HepG2 (cell line): ENCODE measurements at regions of chrX and their contacts with region 1.

Region 1: GRCh38 chrX:57643698-57644097 is 36.4 kb downstream of the NLRP2B start:
- DNase-seq: peak; percentile 80
- ATAC-seq: peak; percentile 68
- H3K4me3 ChIP-seq: no peak overlapping the region
- H3K27ac ChIP-seq: no peak overlapping the region
- H3K4me1 ChIP-seq: peaks cover 46% of the 10 kb centered on the region
- H3K27me3 ChIP-seq: no peaks in the 10 kb centered on the region
- CTCF ChIP-seq: no peak
- EP300 ChIP-seq: peak in 1 of 2 experiments; percentile 71; a peak in 2 of 4 replicates
- POLR2A ChIP-seq: no peak
- RAD21 ChIP-seq: no peak

Region 2: GRCh38 chrX:57595381-57595811 is 48.3 kb before region 1 on chrX:
- CTCF ChIA-PET with region 1: no interaction called
- POLR2A ChIA-PET with region 1: interaction called, 11 read pairs
- in situ Hi-C with region 1: loop called (anchors 5 kb)
- intact Hi-C with region 1: loop called (anchors 2 kb)
- DNase-seq: no peak
- ATAC-seq: no peak
- H3K4me3 ChIP-seq: peak overlapping the region; percentile 39 to 59 (median 50); a peak in 5 of 6 replicates
- H3K27ac ChIP-seq: peak overlapping the region; percentile 61
- H3K4me1 ChIP-seq: peaks cover 38% of the 10 kb centered on the region
- H3K27me3 ChIP-seq: no peaks in the 10 kb centered on the region
- CTCF ChIP-seq: no peak
- EP300 ChIP-seq: no peak; a peak in 1 of 4 replicates
- POLR2A ChIP-seq: no peak
- RAD21 ChIP-seq: no peak